Sigmoid colon (tissue), 7 donors: ENCODE measurements at regions of chr12 and their contacts with region 1.

Region 1: DNA sequence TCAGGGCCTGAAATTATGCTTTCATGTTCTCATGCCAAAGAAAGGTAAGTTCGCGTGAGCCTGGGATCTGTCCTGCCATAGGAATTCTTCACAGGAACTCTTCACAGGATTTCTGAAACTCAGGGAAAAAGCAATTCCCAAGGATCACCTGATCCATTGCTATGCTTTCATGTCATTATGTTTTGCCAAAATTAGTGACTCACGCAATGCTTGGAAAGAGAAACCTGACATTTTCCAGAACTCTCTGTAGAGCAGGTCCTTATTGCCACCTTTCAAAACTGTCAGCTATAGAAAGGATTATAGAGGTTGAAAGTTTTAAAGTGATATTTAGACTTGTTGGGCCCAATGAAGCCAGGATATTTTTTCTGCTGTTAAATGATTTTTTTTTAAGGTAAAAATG is 6.3 kb upstream of the KCNJ8 start:
- DNase-seq: no peak
- H3K4me3 ChIP-seq: no peak overlapping the region
- H3K27ac ChIP-seq: peak overlapping the region; percentile 56 to 77 (median 66)
- H3K4me1 ChIP-seq: peaks cover 0 to 33% (median 25%) of the 10 kb centered on the region in 4 donors
- H3K27me3 ChIP-seq: no peaks in the 10 kb centered on the region
- CTCF ChIP-seq: no peak
- EP300 ChIP-seq: peak; percentile 15 to 85 (median 31)
- POLR2A ChIP-seq: no peak

Region 2: GRCh38 chr12:21823581-21823980 is 42.8 kb after region 1 on chr12:
- intact Hi-C with region 1: loop called (anchors 5 kb)
- DNase-seq: peak; percentile 69
- H3K4me3 ChIP-seq: no peak overlapping the region
- H3K27ac ChIP-seq: peak overlapping the region in 2 of 4 donors; percentile 33 to 46
- H3K4me1 ChIP-seq: peaks cover 0 to 48% (median 30%) of the 10 kb centered on the region in 4 donors
- H3K27me3 ChIP-seq: no peaks in the 10 kb centered on the region
- CTCF ChIP-seq: no peak
- EP300 ChIP-seq: no peak
- POLR2A ChIP-seq: no peak